H1 (cell line): ENCODE measurements at regions of chr12 and their contacts with region 1.

Region 1: DNA sequence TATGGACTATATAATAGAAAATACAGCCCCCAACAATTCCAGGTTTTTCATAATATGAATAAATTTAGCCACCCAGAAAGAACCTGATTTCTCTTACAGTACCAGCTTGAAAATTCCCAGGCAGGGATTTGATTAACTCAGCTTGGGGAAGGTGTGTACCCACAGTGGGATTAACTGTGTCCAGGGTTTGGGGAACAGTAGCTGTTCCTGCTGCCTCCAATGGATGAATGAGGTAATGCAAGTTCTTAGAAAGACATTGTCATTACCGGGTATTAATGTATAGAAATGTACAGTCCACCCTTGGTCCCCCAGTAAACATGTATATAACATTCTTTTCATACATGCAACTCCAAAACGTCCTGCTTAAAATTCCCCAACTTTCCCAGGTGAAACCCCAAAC is 115.6 kb downstream of the LRIG3 start:
- DNase-seq: no peak
- H3K4me3 ChIP-seq: no peak overlapping the region
- H3K27ac ChIP-seq: no peak overlapping the region
- H3K4me1 ChIP-seq: no peaks in the 10 kb centered on the region
- H3K27me3 ChIP-seq: no peaks in the 10 kb centered on the region
- CTCF ChIP-seq: peak; percentile 16 to 53 (median 28); a peak in 3 of 4 replicates
- EP300 ChIP-seq: no peak
- POLR2A ChIP-seq: no peak
- RAD21 ChIP-seq: peak; percentile 47 to 58

Region 2: DNA sequence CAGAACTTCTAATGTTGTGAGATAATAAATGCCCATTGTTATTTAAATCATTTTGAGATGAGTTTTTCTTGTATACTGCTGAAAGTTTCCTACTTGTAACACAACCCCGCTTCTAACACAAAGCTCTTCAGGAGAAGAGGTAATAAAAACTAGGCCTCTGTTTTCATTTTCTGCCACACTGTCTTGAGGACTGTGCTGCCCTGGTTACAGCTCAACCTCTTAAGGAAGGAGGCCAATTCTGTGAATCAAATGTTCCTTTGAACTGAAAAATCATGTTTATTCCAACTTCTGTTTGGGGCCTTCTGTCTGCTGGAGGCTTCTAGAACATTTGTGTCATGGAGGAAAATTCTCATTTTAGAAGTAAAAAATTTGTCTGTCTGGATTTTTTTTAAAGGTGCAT is 15.2 kb after region 1 on chr12:
- CTCF ChIA-PET with region 1: interaction called, 14 read pairs
- POLR2A ChIA-PET with region 1: no interaction called
- DNase-seq: no peak
- H3K4me3 ChIP-seq: no peak overlapping the region
- H3K27ac ChIP-seq: no peak overlapping the region
- H3K4me1 ChIP-seq: no peaks in the 10 kb centered on the region
- H3K27me3 ChIP-seq: no peaks in the 10 kb centered on the region
- CTCF ChIP-seq: no peak
- EP300 ChIP-seq: no peak
- POLR2A ChIP-seq: no peak
- RAD21 ChIP-seq: no peak